A673 (cell line): ENCODE measurements at regions of chr2 and their contacts with region 1.

Region 1: GRCh38 chr2:142165790-142166189 is 35.0 kb upstream of the LRP1B start:
- DNase-seq: peak; percentile 94
- H3K4me3 ChIP-seq: no peak overlapping the region
- H3K27ac ChIP-seq: no peak overlapping the region
- H3K4me1 ChIP-seq: peaks cover 9% of the 10 kb centered on the region
- H3K27me3 ChIP-seq: no peaks in the 10 kb centered on the region
- CTCF ChIP-seq: peak; percentile 81

Region 2: GRCh38 chr2:141767051-141767450 is 398.7 kb before region 1 on chr2:
- CTCF ChIA-PET with region 1: no interaction called
- POLR2A ChIA-PET with region 1: no interaction called
- intact Hi-C with region 1: no loop called
- DNase-seq: peak; percentile 21
- H3K4me3 ChIP-seq: no peak overlapping the region
- H3K27ac ChIP-seq: no peak overlapping the region
- H3K4me1 ChIP-seq: peaks cover 10% of the 10 kb centered on the region
- H3K27me3 ChIP-seq: no peaks in the 10 kb centered on the region
- CTCF ChIP-seq: no peak

Region 3: GRCh38 chr2:142286606-142287005 is 120.8 kb after region 1 on chr2:
- CTCF ChIA-PET with region 1: no interaction called
- POLR2A ChIA-PET with region 1: no interaction called
- intact Hi-C with region 1: loop called (anchors 10 kb)
- DNase-seq: peak; percentile 33
- H3K4me3 ChIP-seq: no peak overlapping the region
- H3K27ac ChIP-seq: no peak overlapping the region
- H3K4me1 ChIP-seq: peaks cover 7% of the 10 kb centered on the region
- H3K27me3 ChIP-seq: no peaks in the 10 kb centered on the region
- CTCF ChIP-seq: peak; percentile 56

Region 4: DNA sequence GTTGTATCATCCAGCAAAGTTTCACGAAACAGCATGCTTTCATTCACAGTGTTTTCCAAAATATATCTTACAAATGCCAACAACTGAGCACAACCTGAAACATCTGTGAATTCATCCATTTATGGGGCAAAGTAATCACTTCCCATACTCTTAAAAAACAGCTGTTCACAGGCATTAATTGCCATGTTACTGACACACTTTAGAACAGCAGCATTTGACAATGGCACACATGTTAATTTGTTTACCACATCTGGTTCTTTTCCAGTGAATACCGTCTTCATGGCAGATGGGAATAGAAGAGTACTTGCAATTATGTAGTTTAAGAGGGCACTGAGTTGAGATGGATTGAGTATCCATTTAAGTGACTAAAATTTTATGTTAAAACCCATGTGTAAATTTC is 312.4 kb after region 1 on chr2:
- CTCF ChIA-PET with region 1: no interaction called
- POLR2A ChIA-PET with region 1: no interaction called
- intact Hi-C with region 1: no loop called
- DNase-seq: no peak
- H3K4me3 ChIP-seq: no peak overlapping the region
- H3K27ac ChIP-seq: no peak overlapping the region
- H3K4me1 ChIP-seq: no peaks in the 10 kb centered on the region
- H3K27me3 ChIP-seq: no peaks in the 10 kb centered on the region
- CTCF ChIP-seq: no peak

Region 5: DNA sequence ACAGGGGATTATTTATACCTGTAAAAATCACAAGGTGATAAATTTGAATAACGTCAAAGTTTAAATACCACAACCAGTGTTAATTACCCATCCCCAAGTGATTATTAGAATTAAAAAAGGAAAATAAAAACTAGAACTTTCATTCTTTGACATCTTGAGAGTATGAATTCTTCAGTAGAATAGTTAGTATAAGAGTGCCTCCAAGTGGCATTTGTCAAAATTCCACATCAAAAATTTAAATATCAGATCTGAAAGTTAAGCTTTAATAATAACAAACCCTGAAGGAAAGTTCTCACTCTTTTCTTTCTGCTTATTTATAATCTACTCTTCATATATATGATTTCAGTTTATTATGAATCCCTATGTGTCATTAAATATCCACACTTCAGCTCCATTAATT is 438.0 kb after region 1 on chr2:
- CTCF ChIA-PET with region 1: interaction called, 5 read pairs
- POLR2A ChIA-PET with region 1: no interaction called
- intact Hi-C with region 1: loop called (anchors 2 kb)
- DNase-seq: peak; percentile 57
- H3K4me3 ChIP-seq: no peak overlapping the region
- H3K27ac ChIP-seq: no peak overlapping the region
- H3K4me1 ChIP-seq: peaks cover 34% of the 10 kb centered on the region
- H3K27me3 ChIP-seq: no peaks in the 10 kb centered on the region
- CTCF ChIP-seq: peak; percentile 71

Region 6: DNA sequence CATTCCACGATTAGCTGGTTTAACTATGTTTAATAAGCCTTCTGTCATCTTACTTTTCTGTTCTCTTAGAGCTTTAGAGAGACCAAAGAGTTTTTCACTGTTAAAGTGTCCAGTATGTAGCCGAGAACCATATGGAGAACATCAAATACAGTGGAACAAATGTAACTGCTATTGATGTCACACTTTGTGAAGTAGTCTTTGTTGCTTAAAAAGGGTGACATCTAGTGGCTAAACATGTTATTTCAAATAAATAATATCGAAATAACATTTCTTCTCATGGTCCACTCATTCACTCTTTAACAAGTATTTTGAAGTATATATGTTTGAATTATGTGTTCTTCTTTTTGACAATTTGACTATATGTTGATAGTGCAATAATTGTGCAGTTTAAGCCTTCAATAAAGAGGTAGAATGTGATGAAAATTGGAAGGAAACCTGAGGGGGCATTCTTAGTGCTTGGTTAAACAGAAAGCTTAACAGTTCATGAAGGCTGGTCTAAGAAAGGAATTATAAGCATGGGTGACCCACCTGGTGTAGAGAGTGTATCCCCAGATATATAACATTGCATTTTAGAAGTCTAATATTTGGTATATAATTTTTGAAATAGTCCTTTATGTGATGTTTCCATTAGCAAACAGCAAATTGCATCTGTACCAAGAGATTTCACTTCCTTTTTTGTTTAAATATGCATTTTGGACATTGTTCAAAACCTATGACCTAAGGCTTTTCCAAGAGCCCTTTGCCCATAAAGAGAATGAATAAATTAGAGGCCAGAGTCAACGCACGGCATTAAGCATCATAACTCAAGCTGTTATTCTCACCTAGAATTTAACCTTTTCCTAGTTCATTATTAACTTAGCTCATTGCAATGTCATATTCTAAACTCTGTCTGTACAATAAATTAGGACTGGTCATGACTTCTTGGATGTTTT is 823.7 kb after region 1 on chr2:
- CTCF ChIA-PET with region 1: no interaction called
- POLR2A ChIA-PET with region 1: no interaction called
- intact Hi-C with region 1: loop called (anchors 10 kb)
- DNase-seq: peak; percentile 73
- H3K4me3 ChIP-seq: no peak overlapping the region
- H3K27ac ChIP-seq: no peak overlapping the region
- H3K4me1 ChIP-seq: peaks cover 10% of the 10 kb centered on the region
- H3K27me3 ChIP-seq: no peaks in the 10 kb centered on the region
- CTCF ChIP-seq: peak; percentile 59